Activated CD4-positive, alpha-beta T cell treated with anti-CD3 and anti-CD28 coated beads for 36 hours (primary cell): ENCODE measurements at regions of chr9 and their contacts with region 1.

Region 1: DNA sequence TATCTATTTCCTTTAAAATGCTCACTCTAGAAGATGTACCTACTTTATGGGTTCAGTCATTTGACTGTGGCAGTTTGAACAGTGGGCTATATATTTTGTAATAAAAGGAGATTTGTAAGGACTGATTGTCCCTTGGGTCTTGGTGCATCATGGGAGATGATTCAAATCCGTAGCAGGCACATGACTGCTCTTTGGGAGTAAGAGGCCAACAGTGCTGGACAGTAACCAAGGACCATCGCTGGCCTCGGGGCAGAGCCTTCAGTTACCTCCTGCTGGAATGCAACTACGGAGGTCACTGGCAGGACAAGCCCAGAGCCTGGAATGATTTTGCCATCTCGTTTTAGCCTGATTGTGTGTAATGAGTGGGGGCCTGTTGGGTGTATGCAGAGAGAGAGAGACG is 7.0 kb upstream of the MAMDC2 start:
- DNase-seq: no peak
- ATAC-seq: no peak
- H3K4me3 Mint-ChIP-seq: no peak overlapping the region
- H3K27ac Mint-ChIP-seq: no peak overlapping the region
- H3K4me1 Mint-ChIP-seq: no peaks in the 10 kb centered on the region
- H3K27me3 Mint-ChIP-seq: peaks cover 2% of the 10 kb centered on the region

Region 2: GRCh38 chr9:70049236-70049635 is 12.6 kb after region 1 on chr9:
- CTCF ChIA-PET with region 1: interaction called, 3 read pairs
- POLR2A ChIA-PET with region 1: no interaction called
- intact Hi-C with region 1: loop called in 1 of 2 experiments (anchors 1 kb)
- DNase-seq: no peak
- ATAC-seq: no peak
- H3K4me3 Mint-ChIP-seq: no peak overlapping the region
- H3K27ac Mint-ChIP-seq: no peak overlapping the region
- H3K4me1 Mint-ChIP-seq: peaks cover 4% of the 10 kb centered on the region
- H3K27me3 Mint-ChIP-seq: peaks cover 34% of the 10 kb centered on the region